ENCODE measurements at regions of chr7 and their contacts with region 1.

Region 1: GRCh38 chr7:73828107-73828803 is 2.5 kb upstream of the CLDN4 start:
- DNase-seq: no peak
- ATAC-seq: no peak
- H3K4me3 Mint-ChIP-seq: peak overlapping the region; percentile 4
- H3K27ac Mint-ChIP-seq: peak overlapping the region; percentile 87
- H3K4me1 Mint-ChIP-seq: peaks cover 69% of the 10 kb centered on the region
- H3K27me3 Mint-ChIP-seq: peaks cover 7% of the 10 kb centered on the region
- CTCF ChIP-seq: no peak

Region 2: DNA sequence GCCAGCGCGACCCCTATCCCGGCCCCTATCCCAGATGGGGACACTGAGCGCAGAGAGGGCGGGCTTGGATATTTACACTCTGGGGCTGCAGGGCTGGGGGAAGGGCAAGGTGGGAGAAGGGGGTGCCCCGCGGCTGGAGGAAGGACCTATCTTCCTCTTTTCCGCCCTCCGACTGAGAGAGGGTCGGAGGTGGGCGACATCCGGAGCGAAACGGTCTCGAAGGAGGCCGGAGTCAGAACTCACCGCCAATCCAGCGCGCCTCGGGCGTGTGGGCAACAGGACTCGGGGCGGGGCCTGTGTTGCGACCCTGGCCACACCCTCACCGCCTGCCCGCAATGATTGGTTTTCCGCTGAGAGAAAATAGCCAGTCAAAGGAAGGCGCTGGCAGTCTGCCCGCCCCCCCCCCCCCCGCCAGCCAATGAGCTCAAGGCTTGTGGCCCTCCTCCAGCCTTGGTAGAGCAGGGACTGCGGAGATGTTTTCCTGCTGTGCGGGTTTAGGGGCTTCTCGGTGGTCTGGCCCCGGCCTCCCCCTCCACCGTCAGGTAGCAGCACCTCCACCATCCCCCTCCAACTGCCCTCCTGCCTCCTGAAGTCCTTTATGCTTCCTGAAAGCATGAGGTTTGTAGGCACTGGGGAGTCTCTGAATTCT is 14.1 kb after region 1 on chr7 and contains the start of gene METTL27:
- CTCF ChIA-PET with region 1: interaction called, 68 read pairs
- POLR2A ChIA-PET with region 1: interaction called, 31 read pairs
- DNase-seq: peak; percentile 96
- ATAC-seq: peak; percentile 93
- H3K4me3 Mint-ChIP-seq: peak within 1 kb of the TSS; percentile 80
- H3K27ac Mint-ChIP-seq: peak within 1 kb of the TSS; percentile 87
- H3K4me1 Mint-ChIP-seq: peaks cover 32% of the 10 kb centered on the region
- H3K27me3 Mint-ChIP-seq: no peaks in the 10 kb centered on the region; the same call in 1 of the 2 replicates
- CTCF ChIP-seq: no peak
- total RNA-seq, gene METTL27: 4.3 to 7.7 TPM (median 6.6 TPM) in 3 replicates